GM13977 (cell line): ENCODE measurements at regions of chr19 and their contacts with region 1.

Region 1: GRCh38 chr19:38229585-38230073 is 5.6 kb upstream of the DPF1 start:
- DNase-seq: peak; percentile 94
- CTCF ChIP-seq: no peak

Region 2: GRCh38 chr19:38183251-38183897 is 46.3 kb before region 1 on chr19:
- in situ Hi-C with region 1: no loop called
- DNase-seq: no peak
- CTCF ChIP-seq: no peak

Region 3: GRCh38 chr19:38319421-38320258 is 90.0 kb after region 1 on chr19 and contains the start of gene KCNK6:
- in situ Hi-C with region 1: loop called (anchors 10 kb)
- DNase-seq: no peak
- CTCF ChIP-seq: no peak